Activated naive CD4-positive, alpha-beta T cell treated with anti-CD3 and anti-CD28 coated beads, Interleukin-2, amount 10 ng/mL, durations not matched to agents 7 days and 5 days (primary cell): ENCODE measurements at regions of chr2 and their contacts with region 1.

Region 1: DNA sequence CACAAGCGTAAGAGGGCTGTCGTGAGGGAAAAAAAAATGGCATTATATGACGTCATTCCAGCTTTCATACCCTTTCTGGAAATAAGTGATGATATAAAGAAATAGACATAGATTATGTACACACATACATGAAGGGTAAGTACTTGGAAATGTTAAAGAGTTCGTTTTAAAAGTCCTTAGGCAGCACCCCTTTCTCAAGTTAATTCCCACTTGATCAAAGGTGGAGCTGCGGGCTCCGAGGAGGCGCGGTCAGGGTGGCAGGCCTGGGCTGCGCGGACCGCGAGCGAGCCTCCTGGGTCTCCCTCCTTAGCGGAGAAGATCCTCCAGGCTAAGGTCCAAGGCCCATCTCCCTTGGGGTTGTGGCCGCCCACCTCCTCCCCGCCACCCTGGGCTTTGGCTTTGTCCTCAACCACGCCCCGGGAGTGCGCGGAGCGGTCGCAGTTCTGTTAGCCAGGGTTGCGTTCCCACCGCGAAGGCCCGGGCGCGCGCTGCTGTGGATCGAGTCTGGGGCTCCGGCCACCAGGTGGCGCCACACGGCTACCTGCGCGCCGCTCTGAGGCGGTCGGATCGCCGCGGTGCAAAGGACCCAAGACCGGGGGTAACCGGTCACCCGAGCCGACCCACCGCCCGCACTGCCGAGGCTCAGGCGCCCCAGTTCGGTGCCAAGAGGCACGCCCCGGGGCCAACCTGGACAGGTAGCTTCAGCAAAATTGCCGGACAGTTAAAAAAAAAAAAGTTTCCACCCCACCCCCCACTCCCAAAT is 66.8 kb downstream of the HNRNPLL start:
- DNase-seq: peak; percentile 83
- H3K4me3 Mint-ChIP-seq: peak overlapping the region; percentile 37
- H3K27ac Mint-ChIP-seq: no peak overlapping the region
- H3K4me1 Mint-ChIP-seq: peaks cover 6% of the 10 kb centered on the region
- H3K27me3 Mint-ChIP-seq: peaks cover 53% of the 10 kb centered on the region

Region 2: DNA sequence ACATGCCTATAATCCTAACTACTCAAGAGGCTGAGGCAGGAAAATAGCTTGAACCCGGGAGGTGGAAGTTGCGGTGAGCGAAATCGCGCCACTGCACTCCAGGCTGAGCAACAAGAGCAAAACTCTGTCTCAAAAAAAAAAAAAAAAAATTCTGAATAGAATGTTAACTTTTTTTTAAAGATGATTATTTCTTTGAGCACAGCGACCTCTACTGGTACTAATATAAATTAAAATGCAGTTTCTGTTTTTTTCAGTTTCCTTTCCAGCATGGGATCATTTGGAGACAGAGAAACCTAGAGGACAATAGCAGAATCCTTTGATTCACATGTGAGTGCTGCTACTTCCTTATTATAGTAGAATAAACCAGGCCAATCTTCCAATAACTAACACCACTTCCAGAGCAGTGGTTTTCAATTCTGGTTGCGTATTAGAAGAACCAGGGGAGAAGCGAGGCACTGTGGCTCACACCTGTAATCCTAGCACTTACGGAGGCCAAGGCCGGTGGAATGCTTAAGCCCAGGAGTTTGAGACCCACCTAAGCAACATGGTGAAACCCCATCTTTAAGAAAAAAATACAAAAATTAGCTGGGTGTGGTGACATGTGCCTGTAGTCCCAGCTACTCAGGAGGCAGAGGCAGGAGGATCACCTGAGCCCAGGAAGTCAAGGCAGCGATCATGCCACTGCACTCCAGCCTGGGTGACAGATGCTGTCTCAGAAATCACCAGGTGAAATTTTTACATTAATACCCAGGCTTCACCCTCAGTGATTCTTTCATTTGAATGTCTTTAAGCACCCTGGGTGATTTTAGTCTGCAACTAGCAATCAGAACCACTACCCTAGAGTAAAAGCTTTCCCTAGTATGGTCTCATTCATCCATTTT is 205.2 kb after region 1 on chr2:
- CTCF ChIA-PET with region 1: interaction called, 22 read pairs
- DNase-seq: peak; percentile 54
- H3K4me3 Mint-ChIP-seq: no peak overlapping the region
- H3K27ac Mint-ChIP-seq: peak overlapping the region; percentile 54
- H3K4me1 Mint-ChIP-seq: peaks cover 28% of the 10 kb centered on the region
- H3K27me3 Mint-ChIP-seq: no peaks in the 10 kb centered on the region